Dorsolateral prefrontal cortex (tissue), 120 donors: ENCODE measurements at regions of chr16 and their contacts with region 1.

Region 1: GRCh38 chr16:73457851-73458250 is 409.9 kb upstream of the ZFHX3 start:
- DNase-seq: no peak
- H3K4me3 ChIP-seq: no peak overlapping the region
- H3K27ac ChIP-seq: no peak overlapping the region
- H3K27me3 ChIP-seq: no peaks in the 10 kb centered on the region
- CTCF ChIP-seq: no peak

Region 2: DNA sequence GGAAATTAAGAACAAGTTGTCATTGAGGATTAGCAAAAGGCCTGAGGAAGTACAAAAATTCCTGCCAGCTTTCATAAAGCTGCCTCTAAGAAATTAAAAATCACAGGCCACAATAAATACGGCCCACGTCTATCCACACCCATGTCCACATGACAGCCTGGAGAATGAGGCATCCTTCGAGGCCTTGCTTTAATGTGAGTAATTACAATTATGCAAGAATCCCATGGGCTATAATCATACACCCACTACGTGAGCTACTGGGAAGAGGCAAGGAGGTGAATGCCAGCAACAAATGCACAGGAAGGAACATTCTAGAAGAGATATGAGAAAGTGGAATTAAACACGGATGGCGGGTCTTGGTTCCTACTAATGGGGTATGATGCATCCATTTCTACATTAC is 344.5 kb before region 1 on chr16:
- intact Hi-C with region 1: no loop called
- DNase-seq: no peak
- H3K4me3 ChIP-seq: no peak overlapping the region
- H3K27ac ChIP-seq: no peak overlapping the region
- H3K27me3 ChIP-seq: no peaks in the 10 kb centered on the region
- CTCF ChIP-seq: no peak

Region 3: DNA sequence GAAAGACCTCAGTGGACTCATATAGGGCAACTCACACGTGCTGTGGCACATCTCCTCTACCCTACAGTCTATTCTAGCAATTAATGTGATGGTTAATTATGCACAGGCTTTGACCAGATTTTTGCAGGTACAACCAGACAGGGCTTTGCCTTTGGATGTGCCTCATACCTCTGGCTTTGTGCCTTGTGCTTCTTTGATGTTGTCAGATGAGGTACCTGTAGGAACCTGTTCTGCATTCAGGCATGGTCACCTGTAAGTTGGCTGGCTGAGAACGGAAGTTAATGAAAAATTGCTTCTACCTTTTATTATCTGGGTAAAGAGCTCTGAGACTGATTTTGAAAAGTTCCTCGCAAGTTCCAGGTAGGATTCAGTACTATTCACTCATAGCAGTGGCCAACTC is 53.0 kb after region 1 on chr16:
- intact Hi-C with region 1: loop called in 1 of 2 experiments (anchors 10 kb)
- DNase-seq: no peak
- H3K4me3 ChIP-seq: no peak overlapping the region
- H3K27ac ChIP-seq: no peak overlapping the region
- H3K27me3 ChIP-seq: peaks cover 0 to 11% (median 0%) of the 10 kb centered on the region in 45 donors
- CTCF ChIP-seq: no peak